ENCODE measurements at regions of chr7 and their contacts with region 1.

Region 1: GRCh38 chr7:136687693-136688322 is 180.6 kb upstream of the CHRM2 start:
- DNase-seq: no peak
- H3K4me3 ChIP-seq: no peak overlapping the region
- H3K27ac ChIP-seq: no peak overlapping the region
- H3K4me1 ChIP-seq: no peaks in the 10 kb centered on the region
- H3K27me3 ChIP-seq: peaks cover 0 to 1% (median 0%) of the 10 kb centered on the region in 4 experiments; a peak in 1 of 7 replicates
- CTCF ChIP-seq: peak in 2 of 3 experiments; percentile 44 to 57; a peak in 2 of 4 replicates
- EP300 ChIP-seq: no peak
- POLR2A ChIP-seq: no peak
- RAD21 ChIP-seq: peak; percentile 59 to 69

Region 2: DNA sequence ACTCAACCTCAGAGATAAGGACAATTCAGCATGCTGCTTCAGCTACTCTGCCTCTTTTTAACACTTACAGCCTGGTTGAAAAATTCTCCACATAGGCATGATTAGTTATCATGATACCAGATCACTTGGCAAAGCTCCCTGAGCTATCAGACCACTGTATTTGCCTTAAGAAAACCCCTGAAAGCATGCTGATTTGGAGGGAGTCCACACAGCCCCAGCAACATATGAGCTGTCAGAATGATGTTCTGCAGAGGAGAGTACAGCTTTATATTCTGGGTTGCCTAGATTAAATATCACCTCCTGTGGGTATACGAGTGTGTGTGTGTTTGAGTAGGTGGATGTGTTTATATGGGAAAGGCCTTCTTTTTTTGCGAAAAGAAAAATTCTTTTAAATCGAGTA is 10.4 kb after region 1 on chr7:
- CTCF ChIA-PET with region 1: interaction called, 14 read pairs
- POLR2A ChIA-PET with region 1: no interaction called
- DNase-seq: no peak
- H3K4me3 ChIP-seq: no peak overlapping the region
- H3K27ac ChIP-seq: no peak overlapping the region
- H3K4me1 ChIP-seq: no peaks in the 10 kb centered on the region
- H3K27me3 ChIP-seq: no peaks in the 10 kb centered on the region; a peak in 1 of 7 replicates
- CTCF ChIP-seq: no peak
- EP300 ChIP-seq: no peak
- POLR2A ChIP-seq: no peak
- RAD21 ChIP-seq: no peak

Region 3: GRCh38 chr7:136783934-136784333 is 96.1 kb after region 1 on chr7:
- CTCF ChIA-PET with region 1: no interaction called
- POLR2A ChIA-PET with region 1: no interaction called
- DNase-seq: no peak
- H3K4me3 ChIP-seq: no peak overlapping the region
- H3K27ac ChIP-seq: no peak overlapping the region
- H3K4me1 ChIP-seq: no peaks in the 10 kb centered on the region
- H3K27me3 ChIP-seq: no peaks in the 10 kb centered on the region
- CTCF ChIP-seq: no peak
- EP300 ChIP-seq: no peak
- POLR2A ChIP-seq: no peak
- RAD21 ChIP-seq: no peak

Measured in H1 (cell line).